SK-N-SH (cell line): ENCODE measurements at regions of chr2 and their contacts with region 1.

Region 1: DNA sequence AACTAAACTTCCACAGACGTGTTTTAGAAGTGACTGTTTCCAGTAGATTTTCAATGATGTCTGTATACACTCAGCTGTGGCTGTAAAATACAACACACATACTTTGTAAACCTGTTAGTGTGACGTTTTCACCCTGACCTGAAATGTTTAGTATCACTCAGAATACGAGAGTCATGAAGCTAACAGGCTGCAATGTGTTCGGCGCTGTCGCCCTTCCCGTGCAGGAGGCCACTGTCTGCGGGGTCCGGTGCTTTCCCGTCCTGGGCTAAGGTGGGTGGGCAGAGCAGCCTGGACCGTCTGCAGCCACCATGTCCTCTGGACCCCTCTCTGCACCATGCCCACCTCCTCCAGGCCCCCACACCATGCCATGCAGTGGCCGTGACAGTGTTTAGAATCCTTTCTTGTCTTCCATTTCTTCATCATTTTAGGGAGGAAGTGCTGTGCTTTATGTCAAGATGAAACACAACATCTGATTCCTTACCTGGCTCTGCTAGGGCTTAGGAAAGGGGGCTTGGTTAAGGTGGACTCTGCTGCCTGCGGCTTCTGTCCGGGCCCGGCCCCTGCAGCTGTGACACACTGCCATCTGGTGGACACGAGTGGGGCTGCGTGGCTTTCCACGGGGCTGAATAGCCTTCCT is 53.8 kb upstream of the RBM44 start:
- DNase-seq: peak; percentile 92
- H3K4me3 ChIP-seq: no peak overlapping the region; a peak in 1 of 4 replicates
- H3K27ac ChIP-seq: peak overlapping the region in 1 of 2 experiments; percentile 16; a peak in 1 of 4 replicates
- H3K4me1 ChIP-seq: peaks cover 3 to 10% of the 10 kb centered on the region in 2 experiments; a peak in 2 of 4 replicates
- H3K27me3 ChIP-seq: no peaks in the 10 kb centered on the region
- CTCF ChIP-seq: peak; percentile 98
- EP300 ChIP-seq: no peak
- RAD21 ChIP-seq: peak; percentile 99

Region 2: DNA sequence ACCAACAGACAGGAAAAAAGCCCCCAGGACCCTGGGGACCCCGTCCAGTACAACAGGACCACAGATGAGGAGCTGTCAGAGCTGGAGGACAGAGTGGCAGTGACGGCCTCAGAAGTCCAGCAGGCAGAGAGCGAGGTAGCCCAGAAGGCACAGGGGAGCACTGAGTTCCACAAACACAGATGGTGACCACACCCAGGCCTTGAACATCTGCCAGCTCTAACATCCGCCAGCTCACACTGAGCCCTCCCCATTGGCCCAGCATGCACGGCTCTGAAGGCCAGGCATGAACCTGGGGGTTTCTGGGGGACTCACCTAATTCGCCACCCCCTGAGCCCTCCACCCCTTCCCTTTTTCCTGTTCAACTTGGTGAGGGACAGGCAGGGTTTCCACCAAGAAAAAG is 203.9 kb before region 1 on chr2:
- CTCF ChIA-PET with region 1: no interaction called
- POLR2A ChIA-PET with region 1: no interaction called
- DNase-seq: no peak
- H3K4me3 ChIP-seq: no peak overlapping the region
- H3K27ac ChIP-seq: no peak overlapping the region
- H3K4me1 ChIP-seq: peaks cover 0 to 8% of the 10 kb centered on the region in 2 experiments; a peak in 1 of 4 replicates
- H3K27me3 ChIP-seq: no peaks in the 10 kb centered on the region
- CTCF ChIP-seq: no peak
- EP300 ChIP-seq: no peak
- RAD21 ChIP-seq: no peak

Region 3: GRCh38 chr2:237581751-237582746 is 162.7 kb before region 1 on chr2:
- CTCF ChIA-PET with region 1: interaction called, 75 read pairs
- POLR2A ChIA-PET with region 1: interaction called, 3 read pairs
- DNase-seq: peak; percentile 69
- H3K4me3 ChIP-seq: no peak overlapping the region
- H3K27ac ChIP-seq: peak overlapping the region in 1 of 2 experiments; percentile 77; a peak in 1 of 4 replicates
- H3K4me1 ChIP-seq: peaks cover 0 to 21% of the 10 kb centered on the region in 2 experiments; a peak in 1 of 4 replicates
- H3K27me3 ChIP-seq: no peaks in the 10 kb centered on the region
- CTCF ChIP-seq: peak; percentile 61
- EP300 ChIP-seq: no peak
- RAD21 ChIP-seq: peak; percentile 77

Region 4: DNA sequence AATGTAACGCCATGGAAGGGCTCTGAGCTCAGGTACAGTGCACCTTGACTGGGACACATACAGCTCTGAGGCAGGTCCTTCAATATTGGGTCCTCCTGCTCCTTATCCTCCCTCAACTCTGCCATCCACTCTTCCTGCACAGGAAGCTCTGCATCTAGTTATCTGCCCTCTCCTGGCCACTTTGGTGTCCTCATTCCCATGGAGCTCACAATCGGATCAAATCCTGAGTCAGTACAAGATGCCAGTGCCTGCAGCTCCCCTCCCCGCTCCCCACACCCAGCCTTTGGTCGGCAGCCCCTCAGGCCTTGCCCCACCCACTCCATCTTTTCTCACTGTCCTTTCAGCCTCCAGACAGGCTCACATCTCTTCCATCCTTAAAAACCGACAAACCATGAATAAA is 59.3 kb before region 1 on chr2:
- CTCF ChIA-PET with region 1: interaction called, 68 read pairs
- POLR2A ChIA-PET with region 1: no interaction called
- DNase-seq: no peak
- H3K4me3 ChIP-seq: no peak overlapping the region
- H3K27ac ChIP-seq: peak overlapping the region in 1 of 2 experiments; percentile 2; a peak in 1 of 4 replicates
- H3K4me1 ChIP-seq: peaks cover 18 to 19% of the 10 kb centered on the region in 2 experiments; a peak in 2 of 4 replicates
- H3K27me3 ChIP-seq: no peaks in the 10 kb centered on the region
- CTCF ChIP-seq: peak; percentile 52
- EP300 ChIP-seq: no peak
- RAD21 ChIP-seq: peak; percentile 47

Region 5: GRCh38 chr2:237700512-237701032 is 44.2 kb before region 1 on chr2:
- CTCF ChIA-PET with region 1: interaction called, 22 read pairs
- POLR2A ChIA-PET with region 1: no interaction called
- DNase-seq: peak; percentile 44
- H3K4me3 ChIP-seq: no peak overlapping the region
- H3K27ac ChIP-seq: peak overlapping the region; percentile 92 to 95
- H3K4me1 ChIP-seq: peaks cover 61 to 92% of the 10 kb centered on the region in 2 experiments
- H3K27me3 ChIP-seq: no peaks in the 10 kb centered on the region
- CTCF ChIP-seq: no peak
- EP300 ChIP-seq: no peak
- RAD21 ChIP-seq: no peak

Region 6: DNA sequence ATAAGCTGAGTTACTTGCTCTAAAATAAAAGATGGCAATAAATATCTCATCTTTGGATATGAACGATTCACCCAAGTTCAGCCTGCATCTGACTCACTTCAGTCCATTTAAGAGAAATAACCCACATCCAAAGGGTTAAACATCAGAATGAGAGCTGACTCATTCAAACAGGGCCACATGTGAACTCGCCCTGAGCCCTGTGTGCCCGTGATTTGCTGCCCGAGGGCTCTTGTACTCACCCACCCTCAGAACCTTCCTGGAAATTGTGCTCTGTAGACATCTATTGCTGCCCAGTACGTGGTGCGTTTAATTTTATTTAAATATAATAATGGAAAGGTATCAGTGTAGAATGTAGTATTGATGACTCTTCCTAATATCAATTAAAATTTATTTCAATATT is 13.1 kb before region 1 on chr2:
- CTCF ChIA-PET with region 1: interaction called, 94 read pairs
- POLR2A ChIA-PET with region 1: no interaction called
- DNase-seq: peak; percentile 64
- H3K4me3 ChIP-seq: no peak overlapping the region
- H3K27ac ChIP-seq: peak overlapping the region; percentile 6 to 58
- H3K4me1 ChIP-seq: peaks cover 35 to 46% of the 10 kb centered on the region in 2 experiments; a peak in 3 of 4 replicates
- H3K27me3 ChIP-seq: no peaks in the 10 kb centered on the region
- CTCF ChIP-seq: no peak
- EP300 ChIP-seq: no peak; a peak in 1 of 4 replicates
- RAD21 ChIP-seq: no peak